MCF 10A (cell line): ENCODE measurements at regions of chr2 and their contacts with region 1.

Region 1: DNA sequence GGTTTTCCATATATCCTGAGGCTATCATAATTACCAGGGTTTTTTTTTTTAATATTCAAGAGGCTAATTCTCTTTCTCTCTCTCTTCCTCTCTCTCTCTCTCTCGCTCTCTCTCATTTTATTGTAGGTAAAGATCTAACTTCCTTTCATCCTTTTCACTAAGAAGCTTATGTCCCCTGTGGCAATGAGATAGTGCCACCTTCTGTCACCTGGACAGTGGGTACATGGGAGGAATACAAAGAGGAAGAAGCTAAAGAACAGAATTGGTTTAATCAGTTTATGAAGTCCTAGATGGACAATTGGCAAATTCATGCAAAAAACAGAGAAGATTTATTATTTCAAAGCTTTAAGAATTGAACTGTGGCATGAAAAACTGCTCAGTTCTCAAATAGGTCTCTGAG is 1582.3 kb upstream of the TMEFF2 start:
- DNase-seq: no peak
- H3K4me3 Mint-ChIP-seq: no peak overlapping the region
- H3K27ac Mint-ChIP-seq: no peak overlapping the region
- H3K4me1 Mint-ChIP-seq: no peaks in the 10 kb centered on the region
- H3K27me3 Mint-ChIP-seq: no peaks in the 10 kb centered on the region
- CTCF ChIP-seq: no peak

Region 2: GRCh38 chr2:192228685-192229084 is 1548.3 kb before region 1 on chr2:
- CTCF ChIA-PET with region 1: no interaction called
- POLR2A ChIA-PET with region 1: no interaction called
- intact Hi-C with region 1: loop called (anchors 5 kb)
- DNase-seq: no peak
- H3K4me3 Mint-ChIP-seq: no peak overlapping the region
- H3K27ac Mint-ChIP-seq: no peak overlapping the region
- H3K4me1 Mint-ChIP-seq: no peaks in the 10 kb centered on the region
- H3K27me3 Mint-ChIP-seq: no peaks in the 10 kb centered on the region
- CTCF ChIP-seq: no peak